ENCODE measurements at regions of chr9 and their contacts with region 1.

Region 1: GRCh38 chr9:68872026-68872501 is 141.8 kb downstream of the PRKACG start:
- DNase-seq: no peak
- ATAC-seq: no peak
- H3K4me3 ChIP-seq: no peak overlapping the region
- H3K27ac ChIP-seq: no peak overlapping the region
- H3K4me1 ChIP-seq: no peaks in the 10 kb centered on the region; a peak in 1 of 5 replicates
- H3K27me3 ChIP-seq: no peaks in the 10 kb centered on the region
- CTCF ChIP-seq: no peak
- EP300 ChIP-seq: no peak
- POLR2A ChIP-seq: no peak
- RAD21 ChIP-seq: no peak

Region 2: DNA sequence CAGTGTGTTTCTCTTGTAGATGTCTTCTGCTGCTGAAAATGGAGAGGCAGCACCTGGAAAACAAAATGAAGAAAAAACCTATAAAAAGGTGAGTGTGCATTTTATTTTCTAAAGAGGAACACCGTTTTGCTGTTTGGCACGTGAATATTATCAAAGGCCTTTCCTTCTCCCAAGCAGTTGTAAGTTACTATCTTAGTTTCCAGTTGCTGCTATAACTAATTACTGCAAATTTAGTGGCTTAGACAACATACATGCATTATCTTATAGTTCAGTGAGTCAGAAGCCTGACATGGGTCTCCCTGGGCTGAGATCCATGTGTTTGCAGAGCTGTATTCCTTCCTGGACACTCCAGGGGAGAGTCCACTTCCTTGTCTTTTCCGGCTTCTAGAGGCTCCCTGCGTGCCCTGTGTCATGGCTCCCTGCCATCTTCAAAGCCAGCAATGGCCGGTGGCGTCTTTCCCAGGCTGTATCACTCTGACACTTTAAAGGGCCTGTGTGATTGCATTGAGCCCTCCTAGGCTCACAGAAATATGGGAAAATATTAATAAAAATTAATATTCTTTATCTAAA is 49.4 kb before region 1 on chr9:
- CTCF ChIA-PET with region 1: no interaction called
- POLR2A ChIA-PET with region 1: no interaction called
- in situ Hi-C with region 1: no loop called
- intact Hi-C with region 1: loop called (anchors 5 kb)
- DNase-seq: peak in 1 of 4 experiments; percentile 20
- ATAC-seq: peak; percentile 61
- H3K4me3 ChIP-seq: no peak overlapping the region
- H3K27ac ChIP-seq: peak overlapping the region; percentile 22; the same call in 2 of the 3 replicates
- H3K4me1 ChIP-seq: peaks cover 0 to 11% of the 10 kb centered on the region in 2 experiments; a peak in 3 of 5 replicates
- H3K27me3 ChIP-seq: no peaks in the 10 kb centered on the region
- CTCF ChIP-seq: no peak
- EP300 ChIP-seq: no peak
- POLR2A ChIP-seq: no peak
- RAD21 ChIP-seq: no peak

Region 3: GRCh38 chr9:68919661-68920060 is 47.6 kb after region 1 on chr9:
- CTCF ChIA-PET with region 1: no interaction called
- POLR2A ChIA-PET with region 1: no interaction called
- in situ Hi-C with region 1: no loop called
- intact Hi-C with region 1: loop called (anchors 10 kb)
- DNase-seq: no peak
- ATAC-seq: no peak
- H3K4me3 ChIP-seq: no peak overlapping the region
- H3K27ac ChIP-seq: no peak overlapping the region
- H3K4me1 ChIP-seq: no peaks in the 10 kb centered on the region; a peak in 2 of 5 replicates
- H3K27me3 ChIP-seq: no peaks in the 10 kb centered on the region
- CTCF ChIP-seq: no peak
- EP300 ChIP-seq: no peak
- POLR2A ChIP-seq: no peak
- RAD21 ChIP-seq: no peak

Measured in K562 (cell line).